ENCODE measurements at regions of chr1 and their contacts with region 1.

Region 1: GRCh38 chr1:154955718-154956543 is at the start of gene PBXIP1:
- DNase-seq: peak; percentile 52
- ATAC-seq: peak; percentile 72
- H3K4me3 Mint-ChIP-seq: peak within 1 kb of the TSS; percentile 91
- H3K27ac Mint-ChIP-seq: peak within 1 kb of the TSS; percentile 93
- H3K4me1 Mint-ChIP-seq: peaks cover 81% of the 10 kb centered on the region
- H3K27me3 Mint-ChIP-seq: no peaks in the 10 kb centered on the region
- CTCF ChIP-seq: no peak
- total RNA-seq, gene PBXIP1: 42.4 and 43.2 TPM in 2 replicates

Region 2: GRCh38 chr1:154912755-154913154 is 43.2 kb before region 1 on chr1:
- CTCF ChIA-PET with region 1: no interaction called
- POLR2A ChIA-PET with region 1: no interaction called
- intact Hi-C with region 1: no loop called
- DNase-seq: no peak
- ATAC-seq: no peak
- H3K4me3 Mint-ChIP-seq: no peak overlapping the region
- H3K27ac Mint-ChIP-seq: no peak overlapping the region
- H3K4me1 Mint-ChIP-seq: no peaks in the 10 kb centered on the region
- H3K27me3 Mint-ChIP-seq: no peaks in the 10 kb centered on the region
- CTCF ChIP-seq: no peak

Region 3: GRCh38 chr1:154982897-154983648 is 27.1 kb after region 1 on chr1 and contains the start of gene FLAD1:
- CTCF ChIA-PET with region 1: interaction called, 3 read pairs
- POLR2A ChIA-PET with region 1: interaction called, 12 read pairs
- intact Hi-C with region 1: no loop called
- DNase-seq: peak; percentile 81
- ATAC-seq: peak; percentile 100
- H3K4me3 Mint-ChIP-seq: no peak within 1 kb of the TSS
- H3K27ac Mint-ChIP-seq: no peak within 1 kb of the TSS
- H3K4me1 Mint-ChIP-seq: peaks cover 9% of the 10 kb centered on the region
- H3K27me3 Mint-ChIP-seq: no peaks in the 10 kb centered on the region
- CTCF ChIP-seq: no peak
- total RNA-seq, gene FLAD1: 64.1 and 69.0 TPM in 2 replicates